ENCODE measurements at regions of chr5 and their contacts with region 1.

Region 1: GRCh38 chr5:106028314-106028713 is 1642.4 kb downstream of the EFNA5 start:
- DNase-seq: no peak
- ATAC-seq: no peak
- H3K4me3 Mint-ChIP-seq: no peak overlapping the region
- H3K27ac Mint-ChIP-seq: no peak overlapping the region
- H3K4me1 Mint-ChIP-seq: no peaks in the 10 kb centered on the region
- H3K27me3 Mint-ChIP-seq: no peaks in the 10 kb centered on the region
- CTCF ChIP-seq: no peak

Region 2: DNA sequence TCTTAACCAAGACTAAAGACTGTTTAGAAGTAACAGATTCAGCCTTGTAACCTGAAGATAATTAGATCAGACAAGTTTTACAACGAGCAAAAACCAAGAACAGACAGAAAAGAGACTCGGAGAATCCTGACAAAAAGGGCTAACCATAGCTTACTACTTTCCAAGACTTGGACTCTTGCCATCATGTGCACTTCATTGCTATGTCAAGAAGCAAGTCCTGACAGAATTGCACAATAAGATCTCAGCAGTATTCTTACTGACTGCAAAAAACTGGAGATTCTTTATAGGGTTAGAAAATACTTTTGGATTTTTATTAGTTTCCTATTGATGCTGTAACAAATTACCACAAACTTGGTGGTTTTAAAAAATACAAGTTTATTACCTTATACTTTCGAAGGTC is 926.7 kb before region 1 on chr5:
- CTCF ChIA-PET with region 1: no interaction called
- POLR2A ChIA-PET with region 1: no interaction called
- intact Hi-C with region 1: loop called (anchors 10 kb)
- DNase-seq: no peak
- ATAC-seq: no peak
- H3K4me3 Mint-ChIP-seq: no peak overlapping the region
- H3K27ac Mint-ChIP-seq: no peak overlapping the region
- H3K4me1 Mint-ChIP-seq: no peaks in the 10 kb centered on the region
- H3K27me3 Mint-ChIP-seq: no peaks in the 10 kb centered on the region
- CTCF ChIP-seq: no peak

Measured in activated B cell treated with CpG ODN at 0.5 μM for 24 hours (primary cell).